Naive thymus-derived CD4-positive, alpha-beta T cell (primary cell): ENCODE measurements at regions of chr20 and their contacts with region 1.

Region 1: GRCh38 chr20:32091888-32092346 is 17.6 kb upstream of the TM9SF4 start:
- DNase-seq: peak; percentile 47 to 73 (median 68)
- ATAC-seq: peak; percentile 96
- H3K4me3 ChIP-seq: no peak overlapping the region
- H3K4me3 Mint-ChIP-seq: no peak overlapping the region
- H3K27ac ChIP-seq: no peak overlapping the region
- H3K27ac Mint-ChIP-seq: peak overlapping the region in 1 of 9 donors; percentile 61
- H3K4me1 ChIP-seq: no peaks in the 10 kb centered on the region
- H3K4me1 Mint-ChIP-seq: peaks cover 0 to 6% (median 0%) of the 10 kb centered on the region in 7 donors
- H3K27me3 ChIP-seq: no peaks in the 10 kb centered on the region
- H3K27me3 Mint-ChIP-seq: peaks cover 0 to 26% (median 5%) of the 10 kb centered on the region in 5 donors

Region 2: DNA sequence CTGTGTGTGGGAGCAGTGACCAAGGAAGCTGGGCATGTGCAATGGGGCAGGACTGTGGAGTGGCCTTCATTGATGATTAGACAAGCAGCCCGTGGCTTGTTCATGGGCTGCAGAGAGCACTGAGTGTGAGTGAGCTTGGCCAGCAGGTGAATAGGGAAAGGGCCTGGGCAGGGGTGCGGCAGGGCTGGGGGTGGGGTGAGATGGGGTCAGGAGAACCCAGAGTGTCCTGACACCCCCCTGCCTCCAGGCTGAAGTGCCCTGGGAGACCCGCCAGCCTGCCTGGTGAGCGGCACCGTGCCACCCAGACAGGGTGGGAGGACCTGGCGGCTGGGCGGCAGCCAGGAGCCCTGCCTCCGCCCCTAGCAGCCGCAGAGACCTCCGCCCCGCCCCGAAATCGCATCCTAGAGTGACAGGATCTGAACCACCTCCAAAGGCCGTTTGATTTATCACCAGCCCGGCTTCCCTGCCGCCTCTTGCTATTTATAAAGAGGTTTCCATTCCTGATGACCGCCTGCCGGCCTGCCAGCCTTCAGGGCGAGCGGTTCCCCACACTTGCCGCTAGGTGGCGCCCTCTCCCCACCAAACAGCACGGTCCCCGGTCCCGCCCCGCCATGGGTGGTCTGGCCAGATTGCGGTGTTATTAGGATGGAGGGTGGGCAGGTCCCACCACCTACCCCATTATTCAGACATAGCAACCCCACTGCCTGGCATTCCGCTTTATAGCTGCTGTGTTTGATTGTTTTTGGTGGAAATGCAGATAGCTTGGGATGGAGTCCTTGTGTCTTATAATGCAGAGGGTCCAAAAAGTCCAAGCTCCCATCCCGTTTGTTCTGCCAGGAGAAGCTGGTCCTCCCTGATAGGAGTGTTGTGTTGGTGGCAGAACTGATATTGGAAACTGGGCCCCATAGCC is 269.2 kb before region 1 on chr20:
- CTCF ChIA-PET with region 1: interaction called, 4 read pairs
- POLR2A ChIA-PET with region 1: no interaction called
- intact Hi-C with region 1: loop called in 1 of 2 experiments (anchors 1 kb)
- DNase-seq: peak; percentile 40 to 80 (median 73)
- ATAC-seq: peak; percentile 91
- H3K4me3 ChIP-seq: no peak overlapping the region
- H3K4me3 Mint-ChIP-seq: peak overlapping the region in 5 of 10 donors; percentile 27 to 47 (median 30)
- H3K27ac ChIP-seq: no peak overlapping the region
- H3K27ac Mint-ChIP-seq: peak overlapping the region in 2 of 9 donors; percentile 47 to 59
- H3K4me1 ChIP-seq: peaks cover 0 to 4% of the 10 kb centered on the region in 2 donors
- H3K4me1 Mint-ChIP-seq: peaks cover 0 to 9% (median 0%) of the 10 kb centered on the region in 7 donors
- H3K27me3 ChIP-seq: no peaks in the 10 kb centered on the region
- H3K27me3 Mint-ChIP-seq: peaks cover 0 to 4% (median 0%) of the 10 kb centered on the region in 5 donors

Region 3: GRCh38 chr20:31849455-31849925 is 242.4 kb before region 1 on chr20:
- CTCF ChIA-PET with region 1: interaction called, 3 read pairs
- POLR2A ChIA-PET with region 1: no interaction called
- intact Hi-C with region 1: loop called in 1 of 2 experiments (anchors 1 kb)
- DNase-seq: no peak
- ATAC-seq: no peak
- H3K4me3 ChIP-seq: no peak overlapping the region
- H3K4me3 Mint-ChIP-seq: no peak overlapping the region
- H3K27ac ChIP-seq: no peak overlapping the region
- H3K27ac Mint-ChIP-seq: no peak overlapping the region
- H3K4me1 ChIP-seq: no peaks in the 10 kb centered on the region
- H3K4me1 Mint-ChIP-seq: no peaks in the 10 kb centered on the region
- H3K27me3 ChIP-seq: no peaks in the 10 kb centered on the region
- H3K27me3 Mint-ChIP-seq: peaks cover 15 to 32% (median 18%) of the 10 kb centered on the region in 5 donors